GM10248 (cell line): ENCODE measurements at regions of chr12 and their contacts with region 1.

Region 1: DNA sequence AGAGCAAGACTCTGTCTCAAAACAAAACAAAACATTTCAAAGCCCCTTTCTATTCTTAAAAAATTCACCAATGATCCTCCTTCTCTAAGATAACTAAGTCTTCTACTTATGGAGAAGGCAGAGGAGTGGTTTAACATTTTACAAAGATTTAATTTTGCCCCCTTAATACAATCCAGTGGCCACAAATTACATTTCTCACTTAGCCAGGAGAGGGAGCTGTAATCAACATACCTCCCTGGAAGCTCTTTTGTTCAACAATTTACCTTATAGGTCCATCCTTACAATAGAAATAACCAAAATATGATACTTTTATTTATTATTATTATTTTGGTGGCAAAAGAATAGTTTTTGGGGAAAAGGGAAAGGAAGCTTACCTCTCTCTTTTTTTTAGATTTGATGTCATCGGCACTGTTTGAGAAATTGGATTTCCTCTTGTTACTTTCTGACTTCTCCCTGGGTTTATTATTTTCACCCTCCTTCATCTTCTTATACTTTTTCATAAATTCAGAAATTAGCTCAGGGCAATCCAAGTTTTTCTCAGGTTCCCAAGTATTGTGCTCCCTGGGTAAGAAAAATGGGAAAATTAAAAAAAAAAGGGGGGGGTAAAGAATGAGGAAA is 28.1 kb downstream of the CBX5 start:
- DNase-seq: peak; percentile 65
- CTCF ChIP-seq: peak; percentile 66

Region 2: GRCh38 chr12:53917126-53917653 is 334.6 kb before region 1 on chr12:
- CTCF ChIA-PET with region 1: no interaction called
- POLR2A ChIA-PET with region 1: no interaction called
- DNase-seq: no peak
- CTCF ChIP-seq: no peak

Region 3: GRCh38 chr12:53952871-53953734 is 298.7 kb before region 1 on chr12:
- CTCF ChIA-PET with region 1: no interaction called
- POLR2A ChIA-PET with region 1: no interaction called
- DNase-seq: no peak
- CTCF ChIP-seq: no peak

Region 4: GRCh38 chr12:54053751-54054741 is 197.7 kb before region 1 on chr12 and contains the start of gene HOXC4:
- CTCF ChIA-PET with region 1: no interaction called
- POLR2A ChIA-PET with region 1: no interaction called
- DNase-seq: peak; percentile 78
- CTCF ChIP-seq: no peak

Region 5: DNA sequence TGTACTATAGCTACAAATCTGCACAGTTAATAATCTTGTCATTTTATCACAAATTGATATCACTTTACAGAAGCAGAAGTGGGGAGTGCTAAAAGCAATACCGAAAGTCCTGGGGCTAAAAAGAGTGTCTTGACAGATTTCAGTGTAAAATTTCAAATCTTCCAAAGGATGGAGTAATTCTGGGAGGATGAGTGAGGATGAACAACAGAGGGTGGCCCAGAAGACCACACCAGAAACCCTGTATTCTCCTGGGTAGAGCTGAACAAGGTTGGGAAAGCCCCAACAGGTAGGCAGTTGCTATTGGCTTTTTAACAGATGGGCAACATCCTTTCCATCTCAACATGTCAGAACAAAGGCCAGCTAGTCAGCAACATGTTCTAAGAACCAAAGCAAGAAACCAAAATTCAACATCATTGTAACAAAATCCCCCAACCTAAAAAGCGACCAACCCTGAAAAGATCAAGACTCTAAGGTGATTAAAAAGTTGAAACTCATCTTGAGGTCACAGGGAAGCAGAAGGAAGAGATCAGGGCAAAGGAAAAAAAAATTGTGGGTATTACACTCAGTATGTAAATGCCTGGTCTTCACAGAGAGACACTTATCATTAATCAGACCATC is 10.7 kb before region 1 on chr12:
- CTCF ChIA-PET with region 1: interaction called, 85 read pairs
- POLR2A ChIA-PET with region 1: no interaction called
- DNase-seq: no peak
- CTCF ChIP-seq: no peak

Region 6: GRCh38 chr12:54272214-54272613 is 20.4 kb after region 1 on chr12:
- CTCF ChIA-PET with region 1: interaction called, 80 read pairs
- POLR2A ChIA-PET with region 1: no interaction called
- DNase-seq: no peak
- CTCF ChIP-seq: no peak

Region 7: GRCh38 chr12:54279866-54280467 is 28.2 kb after region 1 on chr12 and contains the start of gene CBX5:
- CTCF ChIA-PET with region 1: interaction called, 15 read pairs
- POLR2A ChIA-PET with region 1: interaction called, 6 read pairs
- DNase-seq: peak; percentile 96
- CTCF ChIP-seq: no peak

Region 8: GRCh38 chr12:54359033-54359761 is 107.4 kb after region 1 on chr12:
- CTCF ChIA-PET with region 1: interaction called, 11 read pairs
- POLR2A ChIA-PET with region 1: no interaction called
- DNase-seq: peak; percentile 97
- CTCF ChIP-seq: no peak

Region 9: DNA sequence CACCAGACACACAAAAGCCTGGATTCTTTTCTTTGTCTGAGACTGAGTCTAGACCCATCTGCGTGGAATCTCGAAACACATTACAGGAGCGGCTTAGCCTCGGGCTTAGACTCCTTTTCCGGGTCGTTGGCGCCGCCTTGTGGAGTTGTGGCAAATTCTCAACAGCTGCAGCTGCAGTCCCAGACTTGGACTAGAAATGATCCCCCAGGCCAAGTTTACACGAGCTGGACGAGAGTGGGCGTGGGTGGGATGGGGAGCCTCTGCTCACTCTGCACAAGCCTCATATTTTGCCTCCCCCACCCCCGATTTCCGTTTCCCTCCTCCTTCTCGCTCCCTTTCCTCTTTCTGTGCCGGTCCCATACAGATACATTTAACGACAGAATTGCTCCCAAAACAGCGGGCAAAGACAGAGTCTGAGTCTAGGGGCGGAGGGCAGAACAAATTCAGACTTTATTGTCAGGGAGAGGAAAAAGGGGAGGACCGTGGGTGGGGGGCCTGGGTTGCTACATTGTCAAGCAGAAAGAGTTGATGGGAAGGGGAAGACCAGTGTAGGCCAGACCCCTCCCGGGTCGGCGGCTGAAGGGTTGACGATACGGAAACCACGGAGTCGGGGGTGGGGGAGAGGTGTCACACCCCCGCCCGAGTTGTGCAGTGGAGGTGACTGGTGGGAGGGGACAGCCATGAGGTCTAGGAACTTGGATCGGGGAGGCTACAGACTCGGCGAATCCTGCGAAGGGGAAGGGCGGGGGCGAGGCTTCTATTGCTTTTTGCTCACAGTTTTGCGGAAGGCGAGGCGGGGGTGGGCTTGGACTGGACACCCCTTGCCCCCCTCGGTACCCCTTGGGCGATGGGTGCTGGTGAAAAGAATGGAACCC is 117.2 kb after region 1 on chr12:
- CTCF ChIA-PET with region 1: interaction called, 12 read pairs
- POLR2A ChIA-PET with region 1: no interaction called
- DNase-seq: peak; percentile 82
- CTCF ChIP-seq: peak; percentile 96